ENCODE measurements at regions of chr3 and their contacts with region 1.

Region 1: GRCh38 chr3:102646557-102646956 is 211.7 kb downstream of the ZPLD1 start:
- DNase-seq: no peak
- ATAC-seq: no peak
- H3K4me3 ChIP-seq: no peak overlapping the region
- H3K4me3 Mint-ChIP-seq: no peak overlapping the region
- H3K27ac ChIP-seq: no peak overlapping the region
- H3K27ac Mint-ChIP-seq: no peak overlapping the region
- H3K4me1 ChIP-seq: no peaks in the 10 kb centered on the region
- H3K4me1 Mint-ChIP-seq: no peaks in the 10 kb centered on the region
- H3K27me3 ChIP-seq: no peaks in the 10 kb centered on the region
- H3K27me3 Mint-ChIP-seq: no peaks in the 10 kb centered on the region
- CTCF ChIP-seq: no peak

Region 2: DNA sequence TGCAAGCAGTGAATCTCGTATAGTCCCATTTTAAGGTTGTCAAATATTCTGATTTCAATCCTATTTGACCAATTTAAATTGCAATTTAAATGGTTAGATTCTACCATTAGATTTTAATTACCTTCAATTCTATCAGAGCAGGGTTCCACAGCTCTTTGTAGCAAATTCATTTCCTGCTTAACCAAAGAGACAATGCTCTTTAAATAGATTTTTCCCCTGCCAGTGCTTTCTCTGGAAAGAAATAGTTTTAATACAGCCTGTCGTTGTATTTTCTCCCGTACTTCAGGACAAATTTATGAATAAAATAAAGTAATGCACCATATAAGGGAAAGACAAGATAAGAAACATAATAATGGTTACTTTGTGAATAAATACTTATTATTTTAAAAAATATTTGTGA is 149.0 kb before region 1 on chr3:
- intact Hi-C with region 1: no loop called
- DNase-seq: no peak
- ATAC-seq: no peak
- H3K4me3 ChIP-seq: no peak overlapping the region
- H3K4me3 Mint-ChIP-seq: no peak overlapping the region
- H3K27ac ChIP-seq: no peak overlapping the region
- H3K27ac Mint-ChIP-seq: no peak overlapping the region
- H3K4me1 ChIP-seq: no peaks in the 10 kb centered on the region
- H3K4me1 Mint-ChIP-seq: no peaks in the 10 kb centered on the region
- H3K27me3 ChIP-seq: no peaks in the 10 kb centered on the region
- H3K27me3 Mint-ChIP-seq: no peaks in the 10 kb centered on the region
- CTCF ChIP-seq: no peak

Region 3: DNA sequence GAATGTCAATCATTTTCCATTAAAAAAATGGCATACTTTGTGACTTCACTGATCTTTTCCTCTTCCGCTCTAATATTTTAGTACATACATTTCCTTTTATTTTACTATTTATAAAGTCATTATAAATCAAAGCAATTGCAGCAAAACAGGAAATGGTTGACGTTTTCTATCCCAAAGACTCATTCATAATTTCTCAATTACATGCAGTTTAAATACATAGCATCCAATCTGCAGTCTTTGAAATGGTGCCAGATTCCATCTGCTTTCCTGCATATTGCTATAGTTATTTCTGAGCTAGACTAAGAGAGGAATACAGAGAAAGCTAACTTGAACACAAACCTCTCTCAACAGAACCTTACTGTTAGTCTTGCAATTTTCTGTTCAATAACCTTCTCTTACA is 32.0 kb before region 1 on chr3:
- intact Hi-C with region 1: loop called (anchors 1 kb)
- DNase-seq: no peak
- ATAC-seq: no peak
- H3K4me3 ChIP-seq: no peak overlapping the region
- H3K4me3 Mint-ChIP-seq: no peak overlapping the region
- H3K27ac ChIP-seq: no peak overlapping the region
- H3K27ac Mint-ChIP-seq: no peak overlapping the region
- H3K4me1 ChIP-seq: no peaks in the 10 kb centered on the region
- H3K4me1 Mint-ChIP-seq: no peaks in the 10 kb centered on the region
- H3K27me3 ChIP-seq: no peaks in the 10 kb centered on the region
- H3K27me3 Mint-ChIP-seq: no peaks in the 10 kb centered on the region
- CTCF ChIP-seq: no peak

Region 4: GRCh38 chr3:103158183-103158582 is 511.6 kb after region 1 on chr3:
- intact Hi-C with region 1: no loop called
- DNase-seq: no peak
- ATAC-seq: no peak
- H3K4me3 ChIP-seq: no peak overlapping the region
- H3K4me3 Mint-ChIP-seq: no peak overlapping the region
- H3K27ac ChIP-seq: no peak overlapping the region
- H3K27ac Mint-ChIP-seq: no peak overlapping the region
- H3K4me1 ChIP-seq: no peaks in the 10 kb centered on the region
- H3K4me1 Mint-ChIP-seq: no peaks in the 10 kb centered on the region
- H3K27me3 ChIP-seq: no peaks in the 10 kb centered on the region
- H3K27me3 Mint-ChIP-seq: no peaks in the 10 kb centered on the region
- CTCF ChIP-seq: no peak